Vagina (tissue), 2 donors: ENCODE measurements at regions of chr2 and their contacts with region 1.

Region 1: GRCh38 chr2:77778917-77779316 is 256.7 kb upstream of the LRRTM4 start:
- DNase-seq: no peak
- H3K4me3 ChIP-seq: no peak overlapping the region
- H3K27ac ChIP-seq: no peak overlapping the region
- H3K4me1 ChIP-seq: no peaks in the 10 kb centered on the region
- H3K27me3 ChIP-seq: no peaks in the 10 kb centered on the region
- CTCF ChIP-seq: no peak
- POLR2A ChIP-seq: no peak

Region 2: GRCh38 chr2:77428946-77429345 is 350.0 kb before region 1 on chr2:
- intact Hi-C with region 1: loop called (anchors 10 kb)
- DNase-seq: no peak
- H3K4me3 ChIP-seq: no peak overlapping the region
- H3K27ac ChIP-seq: no peak overlapping the region
- H3K4me1 ChIP-seq: no peaks in the 10 kb centered on the region
- H3K27me3 ChIP-seq: no peaks in the 10 kb centered on the region
- CTCF ChIP-seq: no peak
- POLR2A ChIP-seq: no peak

Region 3: GRCh38 chr2:77469106-77469505 is 309.8 kb before region 1 on chr2:
- intact Hi-C with region 1: no loop called
- DNase-seq: no peak
- H3K4me3 ChIP-seq: no peak overlapping the region
- H3K27ac ChIP-seq: no peak overlapping the region
- H3K4me1 ChIP-seq: no peaks in the 10 kb centered on the region
- H3K27me3 ChIP-seq: no peaks in the 10 kb centered on the region
- CTCF ChIP-seq: no peak
- POLR2A ChIP-seq: no peak

Region 4: GRCh38 chr2:77721593-77721992 is 57.3 kb before region 1 on chr2:
- intact Hi-C with region 1: no loop called
- DNase-seq: no peak
- H3K4me3 ChIP-seq: no peak overlapping the region
- H3K27ac ChIP-seq: no peak overlapping the region
- H3K4me1 ChIP-seq: no peaks in the 10 kb centered on the region
- H3K27me3 ChIP-seq: no peaks in the 10 kb centered on the region
- CTCF ChIP-seq: no peak
- POLR2A ChIP-seq: no peak